ENCODE measurements at regions of chr14 and their contacts with region 1.

Region 1: DNA sequence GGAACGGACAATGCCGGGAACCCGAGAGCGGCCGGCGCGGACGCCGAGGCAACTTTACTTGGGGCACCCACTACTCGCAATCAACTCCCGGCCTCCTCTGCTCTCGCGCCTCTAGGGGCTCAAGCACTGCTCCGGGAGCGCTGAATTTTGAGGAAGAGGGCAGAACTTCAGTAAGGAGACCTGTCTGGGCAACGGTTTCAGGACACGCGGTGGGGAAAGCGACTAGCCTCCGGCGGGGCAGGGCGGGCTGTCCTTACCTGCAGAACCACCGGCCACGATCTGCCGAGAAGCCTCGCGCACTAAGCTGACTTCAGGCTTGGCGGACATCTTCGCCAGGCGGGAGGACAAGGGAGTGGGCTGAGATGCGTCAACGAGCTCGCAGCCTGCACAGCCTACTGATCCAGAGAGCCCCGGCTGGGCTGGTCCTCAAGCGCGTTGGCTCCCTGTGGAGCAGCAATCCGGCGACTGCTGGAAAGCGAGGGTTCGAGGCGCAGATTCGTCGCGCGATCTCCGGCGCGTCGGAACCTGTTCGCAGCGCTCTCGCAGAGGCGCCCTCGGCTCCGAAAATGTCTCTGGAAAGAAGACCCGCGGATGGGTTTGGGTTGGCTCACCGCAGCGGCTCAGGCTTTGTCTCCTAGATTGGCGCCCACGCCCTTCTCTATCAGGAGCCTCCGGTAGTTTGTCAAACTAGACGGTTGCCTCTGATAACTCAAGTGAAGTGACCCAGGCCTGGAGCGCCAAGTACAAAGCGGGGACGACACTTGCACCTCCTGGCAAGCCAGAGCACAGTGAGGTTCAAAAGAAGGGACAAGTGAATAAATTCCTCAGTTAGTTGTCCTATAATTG is at the start of gene SLC25A21:
- DNase-seq: peak; percentile 70 to 84 (median 78)
- ATAC-seq: peak; percentile 94 to 98 (median 97)
- H3K4me3 ChIP-seq: peak within 1 kb of the TSS; percentile 8 to 83 (median 69)
- H3K27ac ChIP-seq: peak within 1 kb of the TSS; percentile 38 to 95 (median 77)
- H3K4me1 ChIP-seq: peaks cover 0 to 24% (median 9%) of the 10 kb centered on the region in 12 donors
- H3K27me3 ChIP-seq: peaks cover 0 to 9% (median 0%) of the 10 kb centered on the region in 9 donors
- CTCF ChIP-seq: peak in 3 of 12 donors; percentile 7 to 22 (median 9)
- POLR2A ChIP-seq: no peak
- total RNA-seq, gene SLC25A21: 0.12 to 1.6 (median 0.24) TPM in 8 of 9 donors, not detected in the other

Region 2: GRCh38 chr14:37197421-37198272 is 25.4 kb after region 1 on chr14 and contains the start of gene MIPOL1:
- intact Hi-C with region 1: loop called in 2 of 10 experiments (anchors 1 to 2 kb)
- DNase-seq: peak; percentile 83 to 92 (median 90)
- ATAC-seq: peak; percentile 95 to 100 (median 100)
- H3K4me3 ChIP-seq: peak within 1 kb of the TSS; percentile 39 to 90 (median 63)
- H3K27ac ChIP-seq: peak within 1 kb of the TSS; percentile 57 to 91 (median 85)
- H3K4me1 ChIP-seq: peaks cover 0 to 15% (median 0%) of the 10 kb centered on the region in 12 donors
- H3K27me3 ChIP-seq: no peaks in the 10 kb centered on the region
- CTCF ChIP-seq: peak in 9 of 12 donors; percentile 21 to 55 (median 43)
- POLR2A ChIP-seq: peak in 1 of 2 donors; percentile 54
- total RNA-seq, gene MIPOL1: 2.9 to 7.3 (median 5.3) TPM